Naive thymus-derived CD4-positive, alpha-beta T cell (primary cell): ENCODE measurements at regions of chr11 and their contacts with region 1.

Region 1: GRCh38 chr11:115334932-115335788 is 169.1 kb downstream of the CADM1 start:
- DNase-seq: peak in 1 of 9 donors; percentile 0
- ATAC-seq: no peak
- H3K4me3 ChIP-seq: no peak overlapping the region
- H3K4me3 Mint-ChIP-seq: no peak overlapping the region
- H3K27ac ChIP-seq: no peak overlapping the region
- H3K27ac Mint-ChIP-seq: no peak overlapping the region
- H3K4me1 ChIP-seq: no peaks in the 10 kb centered on the region
- H3K4me1 Mint-ChIP-seq: no peaks in the 10 kb centered on the region
- H3K27me3 ChIP-seq: no peaks in the 10 kb centered on the region
- H3K27me3 Mint-ChIP-seq: peaks cover 0 to 10% (median 4%) of the 10 kb centered on the region in 5 donors

Region 2: DNA sequence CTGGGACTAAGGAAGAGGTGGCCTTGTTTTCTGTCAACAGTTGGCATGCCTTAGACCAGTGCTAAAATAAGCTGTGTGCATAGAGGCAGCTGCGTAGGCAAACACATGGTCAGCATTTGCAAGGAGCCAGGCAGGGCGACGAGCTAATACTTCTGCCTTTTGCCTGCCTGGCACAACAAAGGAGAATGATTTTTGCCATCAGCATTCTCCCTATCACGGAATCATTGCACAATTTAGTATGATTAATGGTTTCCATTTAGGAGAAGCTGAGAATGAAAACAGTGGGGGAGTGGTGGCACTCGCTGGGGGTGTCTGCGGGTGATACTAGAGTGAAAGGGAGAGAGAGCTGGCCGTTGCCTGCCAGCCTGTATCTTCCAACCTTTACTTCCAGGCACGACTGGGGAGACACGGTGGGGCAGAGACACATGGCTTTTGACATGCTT is 166.9 kb before region 1 on chr11:
- CTCF ChIA-PET with region 1: no interaction called
- POLR2A ChIA-PET with region 1: no interaction called
- intact Hi-C with region 1: no loop called
- DNase-seq: no peak
- ATAC-seq: no peak
- H3K4me3 ChIP-seq: no peak overlapping the region
- H3K4me3 Mint-ChIP-seq: no peak overlapping the region
- H3K27ac ChIP-seq: no peak overlapping the region
- H3K27ac Mint-ChIP-seq: no peak overlapping the region
- H3K4me1 ChIP-seq: no peaks in the 10 kb centered on the region
- H3K4me1 Mint-ChIP-seq: no peaks in the 10 kb centered on the region
- H3K27me3 ChIP-seq: no peaks in the 10 kb centered on the region
- H3K27me3 Mint-ChIP-seq: peaks cover 10 to 40% (median 16%) of the 10 kb centered on the region in 5 donors

Region 3: GRCh38 chr11:115267871-115268270 is 67.3 kb before region 1 on chr11:
- CTCF ChIA-PET with region 1: no interaction called
- POLR2A ChIA-PET with region 1: no interaction called
- intact Hi-C with region 1: no loop called
- DNase-seq: no peak
- ATAC-seq: no peak
- H3K4me3 ChIP-seq: no peak overlapping the region
- H3K4me3 Mint-ChIP-seq: no peak overlapping the region
- H3K27ac ChIP-seq: no peak overlapping the region
- H3K27ac Mint-ChIP-seq: no peak overlapping the region
- H3K4me1 ChIP-seq: no peaks in the 10 kb centered on the region
- H3K4me1 Mint-ChIP-seq: no peaks in the 10 kb centered on the region
- H3K27me3 ChIP-seq: no peaks in the 10 kb centered on the region
- H3K27me3 Mint-ChIP-seq: peaks cover 0 to 12% (median 0%) of the 10 kb centered on the region in 5 donors

Region 4: GRCh38 chr11:115504276-115505158 is 169.4 kb after region 1 on chr11 and contains the start of gene CADM1:
- CTCF ChIA-PET with region 1: no interaction called
- POLR2A ChIA-PET with region 1: no interaction called
- intact Hi-C with region 1: loop called in 1 of 2 experiments (anchors 10 kb)
- DNase-seq: peak; percentile 46 to 65 (median 56)
- ATAC-seq: peak; percentile 95
- H3K4me3 ChIP-seq: peak within 1 kb of the TSS; percentile 80
- H3K4me3 Mint-ChIP-seq: peak within 1 kb of the TSS in 9 of 10 donors; percentile 69 to 85 (median 80)
- H3K27ac ChIP-seq: peak within 1 kb of the TSS; percentile 18
- H3K27ac Mint-ChIP-seq: peak within 1 kb of the TSS in 3 of 9 donors; percentile 16 to 48 (median 29)
- H3K4me1 ChIP-seq: peaks cover 12 to 16% of the 10 kb centered on the region in 2 donors
- H3K4me1 Mint-ChIP-seq: peaks cover 6 to 13% (median 10%) of the 10 kb centered on the region in 7 donors
- H3K27me3 ChIP-seq: peaks cover 3 to 20% of the 10 kb centered on the region in 2 donors
- H3K27me3 Mint-ChIP-seq: peaks cover 33 to 43% (median 41%) of the 10 kb centered on the region in 5 donors
- total RNA-seq, gene CADM1: 0.29 to 2.7 (median 0.43) TPM

Region 5: DNA sequence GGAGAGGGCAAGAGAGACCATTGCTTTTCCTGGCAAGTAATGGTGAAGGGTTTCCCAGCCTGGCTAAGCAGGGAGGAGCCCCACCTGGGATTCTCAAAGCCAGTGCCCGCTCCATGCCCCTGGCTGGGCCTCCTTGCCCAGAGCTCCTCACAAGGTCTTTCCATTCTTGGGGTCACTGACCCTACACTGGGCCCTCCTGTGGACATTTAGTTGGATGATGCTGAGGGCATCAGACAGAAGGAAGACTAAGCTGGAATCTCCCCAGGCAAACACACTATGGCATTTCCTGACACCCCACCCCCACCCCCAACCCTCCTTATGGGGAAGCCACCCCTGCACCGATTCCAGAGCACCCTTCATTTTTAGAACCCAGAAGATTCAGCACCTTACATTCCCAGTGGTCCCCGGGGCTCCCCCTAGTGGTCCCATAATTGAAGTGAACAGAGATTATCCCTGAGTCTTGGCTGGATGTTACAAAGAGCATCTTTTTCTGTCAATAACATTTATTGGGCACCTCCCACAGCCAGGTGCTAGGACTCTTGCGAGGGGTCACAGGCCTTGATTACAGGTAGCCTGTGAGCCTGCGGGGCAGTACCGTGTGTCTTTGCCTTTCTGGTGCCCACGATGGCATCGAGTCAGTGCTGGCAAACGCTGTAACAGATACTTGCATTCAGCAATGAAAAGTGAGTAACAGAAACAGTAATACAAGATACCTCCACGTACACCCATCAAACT is 889.2 kb after region 1 on chr11:
- CTCF ChIA-PET with region 1: no interaction called
- POLR2A ChIA-PET with region 1: no interaction called
- intact Hi-C with region 1: loop called in 1 of 2 experiments (anchors 5 kb)
- DNase-seq: peak in 3 of 9 donors; percentile 9 to 34 (median 10)
- ATAC-seq: peak; percentile 48
- H3K4me3 ChIP-seq: no peak overlapping the region
- H3K4me3 Mint-ChIP-seq: no peak overlapping the region
- H3K27ac ChIP-seq: no peak overlapping the region
- H3K27ac Mint-ChIP-seq: no peak overlapping the region
- H3K4me1 ChIP-seq: no peaks in the 10 kb centered on the region
- H3K4me1 Mint-ChIP-seq: no peaks in the 10 kb centered on the region
- H3K27me3 ChIP-seq: no peaks in the 10 kb centered on the region
- H3K27me3 Mint-ChIP-seq: peaks cover 0 to 34% (median 23%) of the 10 kb centered on the region in 5 donors